A673 (cell line): ENCODE measurements at regions of chr2 and their contacts with region 1.

Region 1: DNA sequence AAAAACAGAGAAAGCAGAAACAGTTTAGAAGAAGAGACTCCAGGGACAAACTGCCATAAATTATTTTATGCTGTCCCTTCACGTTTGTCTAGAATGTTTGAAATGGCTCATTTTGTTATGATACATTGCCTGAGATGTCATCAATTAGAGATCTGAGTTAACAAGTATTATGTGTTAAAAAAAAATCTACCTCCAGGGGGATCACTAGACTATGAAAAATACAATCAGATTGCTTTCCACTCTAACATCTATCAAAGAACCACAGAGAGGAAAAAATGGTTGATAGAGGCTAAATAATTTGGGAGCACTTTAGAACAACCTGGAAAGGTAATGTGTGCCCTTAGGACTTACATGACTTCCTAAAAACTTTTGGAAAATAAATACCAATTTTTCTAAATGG is 103.8 kb upstream of the CCDC150 start:
- DNase-seq: peak; percentile 11
- H3K4me3 ChIP-seq: no peak overlapping the region
- H3K27ac ChIP-seq: no peak overlapping the region
- H3K4me1 ChIP-seq: no peaks in the 10 kb centered on the region
- H3K27me3 ChIP-seq: no peaks in the 10 kb centered on the region
- CTCF ChIP-seq: peak; percentile 31; the same call in 1 of the 2 replicates

Region 2: DNA sequence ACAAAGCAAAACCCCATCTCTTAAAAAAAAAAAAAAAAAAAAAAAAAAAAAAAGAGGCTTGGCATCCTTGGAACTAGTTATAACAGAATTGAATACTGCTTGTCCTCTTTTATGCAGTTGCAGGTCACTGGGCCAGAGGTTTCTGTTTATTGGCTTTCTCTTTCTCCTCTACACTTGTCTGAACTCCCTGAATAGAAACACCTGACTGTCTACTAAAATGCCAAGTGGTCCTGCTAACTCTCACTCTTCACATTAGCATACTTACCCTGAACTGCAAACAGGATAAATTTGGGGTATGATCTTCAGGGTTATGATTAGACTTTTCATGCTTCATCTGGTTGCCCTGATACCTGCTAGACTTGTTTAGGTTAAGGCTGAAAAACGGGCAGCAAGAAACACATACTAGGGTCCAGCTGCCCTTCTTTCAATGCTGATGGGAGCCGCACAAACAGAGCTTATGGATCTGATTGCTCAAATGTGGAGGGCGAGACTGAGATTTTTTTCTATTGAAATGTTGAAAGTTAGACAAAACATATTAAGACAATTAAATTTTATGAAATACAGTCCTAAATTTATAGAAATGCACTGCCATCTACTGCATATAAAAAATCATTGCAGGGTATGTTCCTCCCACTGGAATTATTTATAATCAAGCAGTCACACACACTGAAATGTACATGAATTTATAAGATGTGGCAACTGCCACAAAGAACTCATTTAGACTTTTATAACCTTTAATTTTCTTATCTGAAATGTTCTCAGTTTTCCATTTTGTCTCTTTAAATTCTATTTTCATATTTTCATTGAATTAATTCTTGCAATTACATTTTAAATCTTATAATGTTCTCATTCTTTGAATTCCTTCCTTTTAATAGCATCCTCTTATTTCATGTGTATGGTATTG is 223.0 kb after region 1 on chr2:
- CTCF ChIA-PET with region 1: no interaction called
- POLR2A ChIA-PET with region 1: no interaction called
- intact Hi-C with region 1: loop called (anchors 5 kb)
- DNase-seq: peak; percentile 17
- H3K4me3 ChIP-seq: no peak overlapping the region
- H3K27ac ChIP-seq: no peak overlapping the region
- H3K4me1 ChIP-seq: no peaks in the 10 kb centered on the region
- H3K27me3 ChIP-seq: no peaks in the 10 kb centered on the region
- CTCF ChIP-seq: peak; percentile 52